Activated T-helper 1 cell treated with anti-CD3 and anti-CD28 coated beads, Interleukin-12 subunit alpha, Interleukin-12 subunit beta, Interleukin-2, Interleukin-4 antibody, amounts not matched to agents 30 ng/mL and 10 ng/mL and 1 ng/mL, durations not matched to agents 14 hours and 24 hours and 36 hours (primary cell): ENCODE measurements at regions of chr7 and their contacts with region 1.

Region 1: GRCh38 chr7:142853739-142854371 is 1.0 kb upstream of the EPHB6 start:
- DNase-seq: peak; percentile 50
- H3K4me3 Mint-ChIP-seq: peak overlapping the region; percentile 96
- H3K27ac Mint-ChIP-seq: peak overlapping the region; percentile 82
- H3K4me1 Mint-ChIP-seq: peaks cover 7% of the 10 kb centered on the region
- H3K27me3 Mint-ChIP-seq: peaks cover 25% of the 10 kb centered on the region

Region 2: DNA sequence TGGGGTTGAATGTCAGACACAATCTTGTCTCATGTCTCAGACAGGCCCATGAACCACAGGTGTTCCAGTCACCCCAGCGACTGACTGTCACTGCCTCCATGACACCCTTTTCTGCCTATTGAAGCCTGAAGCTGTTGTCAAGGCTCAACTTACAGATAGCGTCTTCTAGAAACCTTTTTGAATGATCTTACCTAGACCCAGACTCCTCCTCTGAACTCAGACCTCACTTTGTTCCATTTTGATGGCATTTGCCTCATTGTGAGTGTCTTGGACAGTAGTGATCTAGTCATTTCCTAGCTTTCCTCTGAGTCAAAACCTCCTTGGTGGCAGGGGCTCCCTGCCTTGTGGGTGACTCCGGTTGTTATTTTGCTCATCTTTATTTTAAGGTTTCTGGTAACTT is 1400.9 kb before region 1 on chr7:
- intact Hi-C with region 1: no loop called
- DNase-seq: no peak
- H3K4me3 Mint-ChIP-seq: no peak overlapping the region
- H3K27ac Mint-ChIP-seq: peak overlapping the region; percentile 21
- H3K4me1 Mint-ChIP-seq: no peaks in the 10 kb centered on the region
- H3K27me3 Mint-ChIP-seq: peaks cover 14% of the 10 kb centered on the region

Region 3: GRCh38 chr7:142323706-142324105 is 530.1 kb before region 1 on chr7:
- intact Hi-C with region 1: loop called (anchors 5 kb)
- DNase-seq: no peak
- H3K4me3 Mint-ChIP-seq: no peak overlapping the region
- H3K27ac Mint-ChIP-seq: no peak overlapping the region
- H3K4me1 Mint-ChIP-seq: no peaks in the 10 kb centered on the region
- H3K27me3 Mint-ChIP-seq: peaks cover 5% of the 10 kb centered on the region

Region 4: GRCh38 chr7:142535123-142535779 is 318.6 kb before region 1 on chr7:
- intact Hi-C with region 1: loop called (anchors 1 kb)
- DNase-seq: peak; percentile 58
- H3K4me3 Mint-ChIP-seq: peak overlapping the region; percentile 59
- H3K27ac Mint-ChIP-seq: peak overlapping the region; percentile 62
- H3K4me1 Mint-ChIP-seq: peaks cover 29% of the 10 kb centered on the region
- H3K27me3 Mint-ChIP-seq: no peaks in the 10 kb centered on the region

Region 5: GRCh38 chr7:142632291-142633134 is 221.3 kb before region 1 on chr7:
- intact Hi-C with region 1: loop called (anchors 5 kb)
- DNase-seq: peak; percentile 49
- H3K4me3 Mint-ChIP-seq: no peak overlapping the region
- H3K27ac Mint-ChIP-seq: no peak overlapping the region
- H3K4me1 Mint-ChIP-seq: peaks cover 18% of the 10 kb centered on the region
- H3K27me3 Mint-ChIP-seq: peaks cover 11% of the 10 kb centered on the region

Region 6: DNA sequence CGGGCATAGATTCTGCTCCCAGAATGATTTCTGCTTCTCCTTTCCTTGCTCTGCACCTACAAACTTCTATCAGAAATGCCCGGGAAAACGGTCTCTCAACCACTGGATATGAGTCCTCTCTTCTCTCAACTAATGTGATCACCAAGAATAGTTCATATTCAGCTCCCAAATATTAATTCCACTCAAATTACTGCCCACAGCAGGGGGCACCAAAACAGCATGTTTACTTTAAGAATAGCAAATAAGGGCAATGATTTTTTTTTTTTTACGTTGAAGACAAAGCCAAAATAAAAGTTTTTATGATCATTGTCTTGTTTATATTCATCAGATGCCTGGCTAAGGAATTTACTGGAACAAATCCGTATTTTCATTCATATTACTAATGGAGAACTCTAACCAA is 199.5 kb before region 1 on chr7:
- intact Hi-C with region 1: no loop called
- DNase-seq: no peak
- H3K4me3 Mint-ChIP-seq: no peak overlapping the region
- H3K27ac Mint-ChIP-seq: peak overlapping the region; percentile 48
- H3K4me1 Mint-ChIP-seq: no peaks in the 10 kb centered on the region
- H3K27me3 Mint-ChIP-seq: peaks cover 20% of the 10 kb centered on the region

Region 7: GRCh38 chr7:142866361-142867058 is 12.7 kb after region 1 on chr7:
- intact Hi-C with region 1: loop called (anchors 1 kb)
- DNase-seq: no peak
- H3K4me3 Mint-ChIP-seq: no peak overlapping the region
- H3K27ac Mint-ChIP-seq: no peak overlapping the region
- H3K4me1 Mint-ChIP-seq: no peaks in the 10 kb centered on the region
- H3K27me3 Mint-ChIP-seq: peaks cover 2% of the 10 kb centered on the region

Region 8: GRCh38 chr7:142880876-142881505 is 27.1 kb after region 1 on chr7:
- intact Hi-C with region 1: loop called (anchors 1 kb)
- DNase-seq: peak; percentile 24
- H3K4me3 Mint-ChIP-seq: no peak overlapping the region
- H3K27ac Mint-ChIP-seq: no peak overlapping the region
- H3K4me1 Mint-ChIP-seq: no peaks in the 10 kb centered on the region
- H3K27me3 Mint-ChIP-seq: peaks cover 19% of the 10 kb centered on the region